HepG2 (cell line): ENCODE measurements at regions of chr6 and their contacts with region 1.

Region 1: GRCh38 chr6:37222125-37222967 is 35.2 kb upstream of the TBC1D22B start:
- DNase-seq: peak; percentile 91
- ATAC-seq: peak; percentile 96
- H3K4me3 ChIP-seq: peak overlapping the region; percentile 57 to 80 (median 63)
- H3K27ac ChIP-seq: peak overlapping the region; percentile 56
- H3K4me1 ChIP-seq: peaks cover 20% of the 10 kb centered on the region
- H3K27me3 ChIP-seq: no peaks in the 10 kb centered on the region; a peak in 1 of 5 replicates
- CTCF ChIP-seq: peak; percentile 22
- EP300 ChIP-seq: peak in 1 of 2 experiments; percentile 81; a peak in 1 of 4 replicates
- POLR2A ChIP-seq: peak in 1 of 2 experiments; percentile 68; a peak in 3 of 4 replicates
- RAD21 ChIP-seq: no peak

Region 2: DNA sequence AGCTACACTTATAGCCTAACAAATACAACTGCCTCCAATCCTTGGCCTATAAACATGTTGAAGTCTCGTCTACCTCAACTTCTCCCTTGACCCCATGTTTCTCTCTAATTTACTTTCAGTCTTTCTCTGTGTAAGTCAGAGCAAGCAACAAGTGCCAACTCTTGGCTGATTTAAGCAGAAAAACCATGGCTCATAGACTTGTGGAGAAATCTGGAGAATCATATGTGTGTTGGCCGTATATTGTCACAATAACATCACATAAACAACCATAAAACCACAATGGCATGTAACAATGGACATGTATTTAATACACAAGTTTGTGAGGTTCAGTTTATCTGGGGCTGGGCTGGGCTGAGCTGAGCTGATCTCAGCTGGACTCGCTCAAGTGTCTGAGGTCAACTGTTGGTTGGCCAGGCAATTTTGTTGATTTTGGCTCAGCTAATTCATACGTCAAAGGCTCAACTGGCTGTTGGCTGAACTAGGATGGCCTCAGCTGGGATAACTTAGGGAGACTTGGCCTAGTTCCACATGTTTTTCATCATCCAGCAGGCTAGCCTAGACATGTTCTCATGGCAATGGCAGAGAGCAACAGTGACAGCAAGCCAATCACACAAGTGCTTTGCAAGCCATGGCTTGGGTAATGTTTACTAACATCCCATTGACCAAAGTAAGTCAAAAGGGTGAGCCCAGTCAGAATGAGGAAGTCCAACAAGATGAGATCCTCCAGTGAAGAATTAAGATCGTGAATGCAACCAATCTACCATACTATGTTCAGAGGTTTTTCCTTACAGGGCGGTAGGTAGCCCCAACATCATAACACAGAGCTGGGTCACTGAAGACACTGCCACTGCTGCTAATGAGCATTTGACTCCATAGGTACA is 22.3 kb after region 1 on chr6:
- CTCF ChIA-PET with region 1: no interaction called
- POLR2A ChIA-PET with region 1: interaction called, 13 read pairs
- in situ Hi-C with region 1: no loop called
- intact Hi-C with region 1: no loop called
- DNase-seq: peak; percentile 97
- ATAC-seq: peak; percentile 81
- H3K4me3 ChIP-seq: peak overlapping the region in 2 of 3 experiments; percentile 7 to 8; a peak in 2 of 6 replicates
- H3K27ac ChIP-seq: peak overlapping the region; percentile 69
- H3K4me1 ChIP-seq: peaks cover 50% of the 10 kb centered on the region
- H3K27me3 ChIP-seq: no peaks in the 10 kb centered on the region
- CTCF ChIP-seq: no peak
- EP300 ChIP-seq: peak in 1 of 2 experiments; percentile 48; a peak in 2 of 4 replicates
- POLR2A ChIP-seq: peak in 1 of 2 experiments; percentile 70; a peak in 2 of 4 replicates
- RAD21 ChIP-seq: no peak

Region 3: DNA sequence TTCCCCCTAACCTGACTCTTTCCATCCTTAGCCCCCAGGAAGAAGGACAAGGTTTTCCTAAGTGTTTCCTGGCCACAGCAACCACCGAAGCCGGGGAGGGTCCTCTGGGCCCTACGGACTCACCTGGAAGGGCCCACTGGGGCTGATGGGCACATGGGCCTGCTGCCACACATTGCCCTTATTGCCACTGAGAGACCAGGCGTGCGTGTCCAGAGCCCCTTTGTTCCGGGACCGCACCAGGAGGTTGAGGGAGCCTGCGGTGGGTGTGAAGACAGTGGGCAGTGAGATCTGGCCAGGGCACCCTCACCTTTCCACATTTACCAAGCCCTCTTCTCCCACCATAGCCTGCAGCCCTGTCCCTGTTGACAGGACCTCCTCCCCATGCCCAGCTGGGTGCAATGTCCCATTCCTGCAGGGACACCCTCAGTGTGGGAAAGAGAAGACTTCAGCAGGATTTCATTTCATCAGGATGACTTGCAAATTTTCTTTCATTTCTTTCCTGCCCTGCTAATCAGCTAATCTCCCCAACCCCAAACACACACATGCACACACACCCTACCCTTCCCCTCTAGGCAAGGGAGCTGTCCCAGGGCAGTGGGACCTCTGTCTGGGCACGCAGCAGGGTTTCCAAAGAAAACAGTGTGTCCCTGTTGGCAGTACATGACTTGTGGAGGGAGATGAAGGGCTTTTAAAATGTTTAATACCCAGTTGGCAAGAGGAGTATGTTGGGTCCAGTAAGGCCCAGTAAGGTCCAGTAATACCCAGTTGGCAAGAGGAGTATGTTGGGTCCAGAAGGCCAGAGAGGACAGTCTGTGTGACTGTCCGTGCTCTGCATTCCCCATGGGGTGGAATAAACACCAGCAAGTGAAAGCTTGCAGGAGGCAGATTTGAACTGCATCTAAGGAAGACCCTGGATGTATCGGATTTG is 416.3 kb after region 1 on chr6:
- CTCF ChIA-PET with region 1: no interaction called
- POLR2A ChIA-PET with region 1: no interaction called
- in situ Hi-C with region 1: no loop called
- intact Hi-C with region 1: no loop called
- DNase-seq: peak; percentile 32
- ATAC-seq: peak; percentile 27
- H3K4me3 ChIP-seq: no peak overlapping the region
- H3K27ac ChIP-seq: no peak overlapping the region
- H3K4me1 ChIP-seq: no peaks in the 10 kb centered on the region
- H3K27me3 ChIP-seq: peaks cover 1 to 19% of the 10 kb centered on the region in 2 experiments; a peak in 3 of 5 replicates
- CTCF ChIP-seq: no peak
- EP300 ChIP-seq: no peak
- POLR2A ChIP-seq: no peak
- RAD21 ChIP-seq: no peak